Heart left ventricle (tissue), 16 donors: ENCODE measurements at regions of chr1 and their contacts with region 1.

Region 1: GRCh38 chr1:154479764-154480421 is 22.1 kb upstream of the TDRD10 start:
- DNase-seq: peak in 4 of 5 donors; percentile 42 to 70 (median 56)
- ATAC-seq: peak; percentile 60 to 93 (median 91)
- H3K4me3 ChIP-seq: no peak overlapping the region
- H3K27ac ChIP-seq: peak overlapping the region in 5 of 12 donors; percentile 2 to 53 (median 11)
- H3K4me1 ChIP-seq: peaks cover 3 to 46% (median 10%) of the 10 kb centered on the region in 12 donors
- H3K27me3 ChIP-seq: no peaks in the 10 kb centered on the region
- CTCF ChIP-seq: peak; percentile 87 to 97 (median 95)
- POLR2A ChIP-seq: no peak

Region 2: DNA sequence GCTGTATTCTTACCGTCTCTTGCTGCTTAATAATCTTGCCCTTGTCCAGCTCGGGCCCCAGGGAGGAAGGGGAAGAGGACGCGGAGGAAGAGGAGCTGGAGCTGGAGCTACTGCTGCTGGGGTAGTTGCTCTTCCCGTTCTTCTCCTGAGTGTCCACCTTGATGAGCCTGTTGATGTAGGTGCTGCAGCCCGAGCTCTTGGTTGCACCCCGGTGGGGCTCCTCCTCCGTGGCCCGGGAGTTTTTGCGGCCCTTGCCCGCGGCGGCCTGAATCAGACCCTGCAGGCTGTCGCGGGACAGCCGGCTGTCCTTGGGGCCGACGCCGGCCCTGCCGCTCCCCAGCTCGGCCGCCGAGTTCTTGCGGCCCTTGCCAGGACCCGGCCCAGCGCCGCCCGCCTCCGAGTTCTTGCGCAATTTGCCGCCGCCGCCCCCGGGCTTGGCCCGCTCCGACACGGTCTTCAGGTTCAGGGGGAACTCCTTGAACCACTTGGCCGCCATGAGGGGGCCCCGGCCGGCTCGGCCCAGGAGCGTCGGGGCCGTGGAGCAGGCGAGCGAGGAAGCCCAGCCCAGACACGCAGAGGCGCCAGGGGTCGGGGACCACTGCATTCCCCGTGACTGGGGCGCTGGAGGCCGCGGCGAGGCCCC is 21.7 kb after region 1 on chr1:
- intact Hi-C with region 1: loop called in 2 of 10 experiments (anchors 2 kb)
- DNase-seq: peak; percentile 49 to 84 (median 64)
- ATAC-seq: peak in 3 of 4 donors; percentile 45 to 73 (median 72)
- H3K4me3 ChIP-seq: peak overlapping the region; percentile 43 to 78 (median 64)
- H3K27ac ChIP-seq: peak overlapping the region; percentile 72 to 94 (median 88)
- H3K4me1 ChIP-seq: peaks cover 0 to 29% (median 9%) of the 10 kb centered on the region in 12 donors
- H3K27me3 ChIP-seq: peaks cover 0 to 55% (median 23%) of the 10 kb centered on the region in 9 donors
- CTCF ChIP-seq: no peak
- POLR2A ChIP-seq: no peak

Region 3: DNA sequence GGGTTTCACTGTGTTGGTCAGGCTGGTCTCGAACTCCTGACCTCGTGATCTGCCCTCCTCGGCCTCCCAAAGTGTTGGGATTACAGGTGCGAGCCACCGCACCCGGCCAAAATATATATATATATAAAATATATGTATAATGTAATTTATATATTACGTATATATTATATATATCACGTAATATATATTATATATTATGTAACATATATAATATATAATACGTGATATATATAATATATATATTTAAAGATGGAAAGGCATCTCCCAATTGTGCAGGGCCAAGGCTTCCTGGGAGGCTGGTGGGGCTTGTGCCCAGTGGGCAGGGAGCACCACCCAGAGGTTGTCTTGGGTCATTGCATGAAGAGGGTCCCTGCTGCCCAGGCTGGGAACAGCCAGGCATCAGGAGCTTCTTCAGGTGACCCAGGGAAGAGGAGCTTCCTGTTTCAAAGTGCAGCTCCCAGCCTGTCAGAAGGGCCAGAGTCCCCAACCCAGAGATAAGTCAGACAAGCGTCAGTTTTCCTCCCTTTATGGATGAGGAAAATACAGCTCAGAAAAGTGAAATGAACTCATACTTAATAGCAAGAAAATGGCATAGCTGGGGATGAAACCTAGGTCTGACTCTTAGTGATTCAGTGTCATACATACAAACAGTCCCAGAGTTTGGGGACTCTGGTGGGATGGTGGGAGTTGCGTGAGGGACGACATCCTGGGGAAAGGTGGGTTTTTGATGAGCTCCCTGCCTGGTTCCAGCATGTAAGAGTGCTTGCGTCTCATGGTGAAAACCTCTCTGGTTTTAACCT is 66.6 kb after region 1 on chr1:
- intact Hi-C with region 1: loop called (anchors 1 to 5 kb)
- DNase-seq: peak; percentile 51 to 72 (median 56)
- ATAC-seq: peak in 3 of 4 donors; percentile 71 to 80 (median 74)
- H3K4me3 ChIP-seq: no peak overlapping the region
- H3K27ac ChIP-seq: no peak overlapping the region
- H3K4me1 ChIP-seq: peaks cover 0 to 28% (median 13%) of the 10 kb centered on the region in 12 donors
- H3K27me3 ChIP-seq: no peaks in the 10 kb centered on the region
- CTCF ChIP-seq: peak; percentile 71 to 85 (median 78)
- POLR2A ChIP-seq: no peak

Region 4: GRCh38 chr1:154870115-154870571 is 390.2 kb after region 1 on chr1 and contains the start of gene KCNN3:
- intact Hi-C with region 1: loop called in 4 of 10 experiments (anchors 5 to 10 kb)
- DNase-seq: peak; percentile 92 to 95 (median 94)
- ATAC-seq: peak; percentile 97 to 99 (median 98)
- H3K4me3 ChIP-seq: peak within 1 kb of the TSS; percentile 27 to 73 (median 57)
- H3K27ac ChIP-seq: peak within 1 kb of the TSS in 8 of 12 donors; percentile 27 to 65 (median 42)
- H3K4me1 ChIP-seq: peaks cover 0 to 47% (median 32%) of the 10 kb centered on the region in 12 donors
- H3K27me3 ChIP-seq: peaks cover 0 to 11% (median 0%) of the 10 kb centered on the region in 9 donors
- CTCF ChIP-seq: peak in 1 of 12 donors; percentile 5
- POLR2A ChIP-seq: peak in 1 of 2 donors; percentile 88
- total RNA-seq, gene KCNN3: 1.0 to 4.6 (median 3.0) TPM

Region 5: DNA sequence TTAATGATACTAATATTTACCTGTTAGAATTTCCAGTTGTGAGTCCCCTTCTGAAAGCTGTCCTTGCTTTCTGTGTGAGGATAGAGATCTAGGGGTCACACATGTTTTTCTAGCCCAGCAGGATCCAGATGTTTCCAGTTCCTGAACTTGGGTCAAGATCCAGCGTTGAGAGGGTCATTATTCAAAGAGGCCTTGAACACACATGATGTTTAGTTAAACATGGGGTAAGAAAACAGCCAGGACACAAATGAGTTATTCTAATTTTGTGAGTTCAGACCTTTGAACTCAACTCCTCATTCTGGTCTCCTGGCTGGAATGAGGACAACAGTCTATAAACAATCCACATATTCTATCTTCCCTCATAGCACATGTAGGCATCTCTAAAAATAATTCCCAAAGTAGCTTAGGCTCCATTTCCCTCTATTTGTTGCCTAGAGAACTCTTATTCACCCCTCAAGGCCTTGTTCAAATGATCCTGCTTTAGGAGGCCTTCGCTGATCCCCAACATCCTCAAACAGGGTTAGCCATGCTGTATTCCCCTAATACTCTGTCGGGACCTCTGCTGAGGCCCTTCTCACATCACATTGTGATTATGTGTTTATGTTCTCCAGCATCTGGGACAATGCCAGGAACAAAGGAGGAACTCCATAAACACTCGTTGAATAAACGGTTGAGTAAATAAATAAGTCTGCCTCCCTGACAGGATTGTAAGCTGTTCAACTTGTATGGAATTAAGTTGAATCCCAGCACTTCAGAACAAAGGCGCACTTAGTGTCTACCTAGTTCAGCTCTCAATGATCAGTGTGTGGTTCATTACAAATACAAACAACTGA is 405.2 kb after region 1 on chr1:
- intact Hi-C with region 1: loop called in 1 of 10 experiments (anchors 5 kb)
- DNase-seq: no peak
- ATAC-seq: peak in 1 of 4 donors; percentile 39
- H3K4me3 ChIP-seq: no peak overlapping the region
- H3K27ac ChIP-seq: peak overlapping the region in 1 of 12 donors; percentile 0
- H3K4me1 ChIP-seq: peaks cover 0 to 16% (median 5%) of the 10 kb centered on the region in 12 donors
- H3K27me3 ChIP-seq: no peaks in the 10 kb centered on the region
- CTCF ChIP-seq: no peak
- POLR2A ChIP-seq: no peak